ENCODE measurements at regions of chr9 and their contacts with region 1.

Region 1: DNA sequence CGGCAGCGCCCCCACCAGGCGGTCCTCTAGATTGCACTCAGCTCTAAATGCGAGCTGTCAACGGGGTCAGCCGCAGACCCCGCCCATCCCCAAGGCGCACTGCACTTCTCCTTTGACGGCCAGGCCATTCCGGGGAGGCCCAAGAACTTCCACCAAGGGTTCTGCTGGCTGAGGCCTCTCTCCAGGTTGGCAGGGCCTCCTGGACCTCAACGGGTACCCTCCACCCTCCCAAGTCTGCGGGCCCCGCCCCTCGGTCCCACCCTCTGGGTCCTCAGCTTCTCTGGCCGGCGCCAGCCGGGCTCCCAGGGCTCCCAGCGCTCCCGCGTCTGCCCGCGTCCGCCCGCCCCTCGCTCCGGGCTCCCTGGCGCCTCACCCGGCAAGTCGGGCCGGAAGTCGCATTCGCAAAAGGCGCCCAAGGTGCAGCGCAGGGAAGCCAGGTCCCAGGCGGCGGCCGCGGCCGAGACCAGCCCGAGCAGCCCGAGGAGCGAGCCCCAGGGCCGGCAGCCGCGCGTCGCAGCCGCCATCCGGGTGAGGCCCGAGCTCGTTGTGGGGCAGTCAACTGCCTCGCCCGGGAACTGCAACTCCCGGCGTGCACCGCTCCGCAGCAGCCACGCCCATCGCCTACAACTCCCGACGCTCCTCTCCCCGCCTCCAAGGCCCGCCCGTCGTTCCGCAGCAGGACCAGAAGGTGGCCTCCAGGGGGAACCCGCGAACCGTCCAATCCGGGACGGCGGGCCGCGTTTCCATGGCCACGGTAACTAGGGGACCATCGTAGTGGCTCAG is at the start of gene TOR2A:
- DNase-seq: peak; percentile 99
- ATAC-seq: peak; percentile 90
- H3K4me3 Mint-ChIP-seq: peak within 1 kb of the TSS; percentile 72
- H3K27ac Mint-ChIP-seq: no peak within 1 kb of the TSS
- H3K4me1 Mint-ChIP-seq: peaks cover 11% of the 10 kb centered on the region
- H3K27me3 Mint-ChIP-seq: peaks cover 7% of the 10 kb centered on the region
- CTCF ChIP-seq: peak; percentile 63
- total RNA-seq, gene TOR2A: 14.4 to 19.4 TPM (median 16.6 TPM) in 3 replicates

Region 2: DNA sequence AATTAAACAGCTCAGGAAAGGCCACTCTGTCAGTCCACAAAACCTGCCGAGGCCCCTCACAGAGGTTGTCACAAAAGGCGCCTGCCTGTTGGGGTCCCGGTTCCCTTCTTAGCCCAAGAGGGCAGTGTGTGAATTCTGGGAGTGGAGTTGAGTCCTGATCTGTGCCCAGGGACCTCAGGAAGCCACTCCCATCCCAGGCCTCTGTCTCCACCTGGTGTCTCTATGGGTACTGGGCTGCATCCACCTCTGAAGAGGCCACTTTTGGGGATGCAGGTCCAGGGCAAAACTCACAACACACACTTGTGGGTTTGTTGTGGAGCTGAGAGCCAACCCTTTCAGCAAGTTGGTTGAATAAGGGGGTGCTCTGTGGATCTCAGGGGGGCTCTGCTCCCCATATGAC is 197.1 kb before region 1 on chr9:
- CTCF ChIA-PET with region 1: interaction called, 10 read pairs
- POLR2A ChIA-PET with region 1: no interaction called
- DNase-seq: peak; percentile 48
- ATAC-seq: peak; percentile 87
- H3K4me3 Mint-ChIP-seq: no peak overlapping the region
- H3K27ac Mint-ChIP-seq: no peak overlapping the region
- H3K4me1 Mint-ChIP-seq: peaks cover 15% of the 10 kb centered on the region
- H3K27me3 Mint-ChIP-seq: no peaks in the 10 kb centered on the region
- CTCF ChIP-seq: no peak

Region 3: DNA sequence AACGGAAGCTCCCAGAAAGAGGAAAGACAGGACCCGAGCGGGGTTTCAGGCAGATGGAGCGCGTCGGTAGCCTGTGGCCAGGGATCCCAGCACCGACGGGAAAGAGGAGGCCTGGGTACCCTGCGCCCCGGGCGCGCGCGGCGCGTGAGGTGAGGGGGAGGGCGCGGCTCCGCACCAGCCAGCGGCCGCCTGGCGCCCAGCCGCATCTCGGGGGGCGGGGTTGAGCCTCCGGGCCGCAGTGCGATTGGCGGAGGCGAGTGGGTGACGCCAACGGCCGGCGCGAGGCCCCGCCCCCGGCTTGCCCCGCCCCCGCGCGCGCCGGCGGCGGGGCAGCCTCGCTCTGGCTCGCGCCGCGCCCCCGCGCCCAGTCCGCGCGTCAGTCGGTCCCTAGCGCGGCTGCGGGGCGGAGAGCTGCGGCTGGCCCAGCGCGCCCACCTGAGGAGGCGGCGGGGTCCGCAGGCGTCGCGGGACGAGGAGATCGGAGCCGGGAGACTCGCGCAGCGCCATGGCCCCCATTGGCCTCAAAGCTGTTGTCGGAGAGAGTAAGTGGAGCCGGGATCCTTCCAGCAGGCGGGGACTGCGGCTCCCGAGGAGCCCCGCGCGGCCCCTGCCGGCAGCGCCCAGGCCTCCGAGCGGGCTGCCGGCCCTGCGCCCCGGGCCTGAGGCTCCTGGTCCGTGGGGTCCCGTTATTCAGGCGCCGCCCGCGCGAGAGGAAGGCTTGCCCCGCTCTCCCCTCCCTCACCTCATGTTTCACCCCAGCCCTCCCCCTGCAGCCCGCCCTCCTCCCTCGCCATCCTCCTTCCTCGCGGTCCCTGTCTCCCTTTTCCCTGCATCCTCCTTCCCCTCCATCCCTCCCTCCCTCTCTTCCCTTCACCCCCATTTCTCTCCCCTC is 122.8 kb before region 1 on chr9 and contains the start of gene STXBP1:
- CTCF ChIA-PET with region 1: interaction called, 26 read pairs
- POLR2A ChIA-PET with region 1: interaction called, 7 read pairs
- DNase-seq: peak; percentile 90
- ATAC-seq: peak; percentile 74
- H3K4me3 Mint-ChIP-seq: peak within 1 kb of the TSS; percentile 95
- H3K27ac Mint-ChIP-seq: peak within 1 kb of the TSS; percentile 84
- H3K4me1 Mint-ChIP-seq: peaks cover 30% of the 10 kb centered on the region
- H3K27me3 Mint-ChIP-seq: peaks cover 41% of the 10 kb centered on the region
- CTCF ChIP-seq: no peak
- total RNA-seq, gene STXBP1: 37.1 to 45.6 TPM (median 40.3 TPM) in 3 replicates

Region 4: GRCh38 chr9:127715394-127716337 is 19.3 kb before region 1 on chr9 and contains the starts of genes PTRH1 and TTC16:
- CTCF ChIA-PET with region 1: interaction called, 73 read pairs
- POLR2A ChIA-PET with region 1: no interaction called
- DNase-seq: peak; percentile 99
- ATAC-seq: peak; percentile 89
- H3K4me3 Mint-ChIP-seq: peak within 1 kb of the TSS; percentile 97
- H3K27ac Mint-ChIP-seq: peak within 1 kb of the TSS; percentile 91; the same call in 1 of the 2 replicates
- H3K4me1 Mint-ChIP-seq: peaks cover 22% of the 10 kb centered on the region
- H3K27me3 Mint-ChIP-seq: no peaks in the 10 kb centered on the region
- CTCF ChIP-seq: no peak
- total RNA-seq, gene PTRH1: 13.1 to 16.9 TPM (median 13.9 TPM) in 3 replicates
- total RNA-seq, gene TTC16: not detected in 3 replicates

Region 5: GRCh38 chr9:127779136-127779981 is 44.4 kb after region 1 on chr9:
- CTCF ChIA-PET with region 1: interaction called, 34 read pairs
- POLR2A ChIA-PET with region 1: no interaction called
- DNase-seq: no peak
- ATAC-seq: peak; percentile 13; the same call in 1 of the 2 replicates
- H3K4me3 Mint-ChIP-seq: no peak overlapping the region
- H3K27ac Mint-ChIP-seq: no peak overlapping the region
- H3K4me1 Mint-ChIP-seq: peaks cover 23% of the 10 kb centered on the region
- H3K27me3 Mint-ChIP-seq: no peaks in the 10 kb centered on the region
- CTCF ChIP-seq: no peak

Region 6: GRCh38 chr9:127854184-127854806 is 119.4 kb after region 1 on chr9 and contains the start of gene ENG:
- CTCF ChIA-PET with region 1: interaction called, 18 read pairs
- POLR2A ChIA-PET with region 1: no interaction called
- DNase-seq: peak; percentile 62
- ATAC-seq: peak; percentile 91
- H3K4me3 Mint-ChIP-seq: no peak within 1 kb of the TSS
- H3K27ac Mint-ChIP-seq: no peak within 1 kb of the TSS
- H3K4me1 Mint-ChIP-seq: peaks cover 7% of the 10 kb centered on the region; the same call in 1 of the 2 replicates
- H3K27me3 Mint-ChIP-seq: no peaks in the 10 kb centered on the region
- CTCF ChIP-seq: no peak
- total RNA-seq, gene ENG: 3.7 to 4.4 TPM (median 4.2 TPM) in 3 replicates

Measured in WTC11 (cell line).